Thyroid gland (tissue), 4 donors: ENCODE measurements at regions of chr17 and their contacts with region 1.

Region 1: DNA sequence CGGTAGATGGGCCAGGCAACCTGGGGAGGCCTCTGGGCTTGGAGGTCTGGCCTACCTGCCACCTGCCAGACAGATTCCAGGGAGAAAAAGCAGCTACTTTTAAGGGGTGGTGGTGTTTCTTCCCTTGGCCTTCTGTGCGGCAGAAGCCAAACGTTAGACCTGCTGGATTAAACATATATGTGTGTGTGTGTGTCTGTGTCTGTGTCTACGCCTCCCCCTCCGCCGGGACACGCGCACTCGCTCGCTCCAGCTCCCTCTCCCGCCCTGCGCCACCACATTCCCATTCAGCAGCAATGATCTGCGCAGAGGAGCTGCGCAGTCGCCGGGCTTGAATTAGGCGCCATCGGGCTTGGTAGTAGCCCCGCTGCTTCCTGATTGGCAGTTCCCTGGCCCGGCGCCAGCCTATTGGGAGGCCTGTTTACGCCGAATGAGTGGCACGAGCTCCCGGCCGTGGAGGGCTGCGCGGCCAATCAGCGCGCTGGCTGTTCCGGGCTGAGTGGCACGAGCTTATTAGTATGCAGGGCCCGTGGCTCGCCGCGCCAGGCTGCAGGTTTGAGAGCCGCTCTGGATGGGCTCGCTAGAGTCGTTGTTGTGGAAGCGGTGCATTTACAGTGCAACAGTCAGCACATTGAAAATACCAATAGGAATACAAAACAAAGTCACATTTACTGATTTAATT is at the start of gene BAHCC1:
- DNase-seq: peak; percentile 100
- H3K4me3 ChIP-seq: peak within 1 kb of the TSS; percentile 65 to 83 (median 79)
- H3K27ac ChIP-seq: peak within 1 kb of the TSS; percentile 86 to 97 (median 90)
- H3K4me1 ChIP-seq: peaks cover 30 to 40% of the 10 kb centered on the region in 2 donors
- H3K27me3 ChIP-seq: no peaks in the 10 kb centered on the region
- CTCF ChIP-seq: peak in 1 of 6 experiments; percentile 21
- POLR2A ChIP-seq: peak; percentile 81 to 99
- total RNA-seq, gene BAHCC1: 13.7 to 33.7 (median 23.9) TPM

Region 2: GRCh38 chr17:81484195-81484979 is 89.3 kb after region 1 on chr17:
- intact Hi-C with region 1: loop called (anchors 5 kb)
- DNase-seq: peak; percentile 90 to 93
- H3K4me3 ChIP-seq: peak overlapping the region in 1 of 3 donors; percentile 8
- H3K27ac ChIP-seq: no peak overlapping the region
- H3K4me1 ChIP-seq: peaks cover 34 to 64% of the 10 kb centered on the region in 2 donors
- H3K27me3 ChIP-seq: no peaks in the 10 kb centered on the region
- CTCF ChIP-seq: peak; percentile 37 to 100 (median 100)
- POLR2A ChIP-seq: peak in 1 of 2 donors; percentile 14

Region 3: GRCh38 chr17:81511804-81512559 is 116.9 kb after region 1 on chr17:
- intact Hi-C with region 1: loop called (anchors 2 kb)
- DNase-seq: no peak
- H3K4me3 ChIP-seq: peak overlapping the region; percentile 92 to 97 (median 96)
- H3K27ac ChIP-seq: peak overlapping the region; percentile 99 to 100 (median 99)
- H3K4me1 ChIP-seq: peaks cover 39 to 42% of the 10 kb centered on the region in 2 donors
- H3K27me3 ChIP-seq: no peaks in the 10 kb centered on the region
- CTCF ChIP-seq: no peak
- POLR2A ChIP-seq: no peak